Activated CD4-positive, alpha-beta T cell treated with anti-CD3 and anti-CD28 coated beads for 36 hours (primary cell): ENCODE measurements at regions of chr7 and their contacts with region 1.

Region 1: GRCh38 chr7:50467817-50468610 is 17.9 kb upstream of the FIGNL1 start:
- DNase-seq: peak; percentile 92
- ATAC-seq: peak; percentile 95
- H3K4me3 Mint-ChIP-seq: peak overlapping the region; percentile 11
- H3K27ac Mint-ChIP-seq: peak overlapping the region; percentile 59
- H3K4me1 Mint-ChIP-seq: peaks cover 13% of the 10 kb centered on the region
- H3K27me3 Mint-ChIP-seq: peaks cover 5% of the 10 kb centered on the region

Region 2: GRCh38 chr7:50610521-50611277 is 142.7 kb after region 1 on chr7:
- CTCF ChIA-PET with region 1: interaction called, 3 read pairs
- POLR2A ChIA-PET with region 1: no interaction called
- intact Hi-C with region 1: loop called in 1 of 2 experiments (anchors 5 kb)
- DNase-seq: peak; percentile 69
- ATAC-seq: peak; percentile 80
- H3K4me3 Mint-ChIP-seq: no peak overlapping the region
- H3K27ac Mint-ChIP-seq: no peak overlapping the region
- H3K4me1 Mint-ChIP-seq: peaks cover 29% of the 10 kb centered on the region
- H3K27me3 Mint-ChIP-seq: peaks cover 3% of the 10 kb centered on the region

Region 3: DNA sequence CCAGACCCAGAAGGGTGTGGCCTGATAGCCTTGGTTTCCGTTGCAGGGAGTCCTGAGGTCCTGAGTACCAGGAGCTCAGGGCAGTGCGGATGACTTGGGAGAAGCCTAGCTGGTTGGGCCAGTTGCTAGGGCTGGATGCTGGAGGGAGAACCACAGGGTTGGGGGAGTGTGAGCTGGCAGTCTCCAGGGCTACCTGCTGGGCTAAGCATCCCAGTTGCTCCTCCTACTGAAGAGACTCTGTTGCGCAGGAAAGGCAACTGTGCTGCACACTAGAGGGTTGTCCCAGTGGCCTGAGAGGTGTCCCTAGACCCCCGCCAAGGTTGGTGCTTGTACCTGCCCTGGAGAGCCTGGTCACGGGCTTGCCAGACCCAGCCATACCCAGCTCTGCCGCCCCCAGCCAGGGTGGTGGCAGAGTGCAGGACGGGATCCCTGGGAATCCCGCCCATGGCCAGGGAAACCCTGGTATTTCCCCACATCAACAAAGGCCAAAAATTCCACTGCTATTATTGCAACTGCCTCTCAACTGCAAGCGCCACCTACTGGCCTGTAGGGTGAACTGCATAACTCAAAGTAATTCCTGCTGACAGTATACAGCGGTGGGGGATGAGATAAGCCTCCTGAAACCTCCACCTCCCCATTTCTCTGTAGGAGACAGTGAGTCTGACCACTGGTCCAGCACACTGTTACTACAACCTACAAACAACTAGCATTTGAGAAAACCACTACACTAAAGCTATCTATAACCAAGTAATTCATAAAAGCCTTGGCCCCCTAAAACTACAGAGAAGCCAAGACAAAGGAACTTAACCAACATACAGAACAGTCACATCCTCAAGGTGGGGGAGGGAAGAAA is 164.8 kb after region 1 on chr7:
- CTCF ChIA-PET with region 1: interaction called, 39 read pairs
- POLR2A ChIA-PET with region 1: no interaction called
- intact Hi-C with region 1: loop called (anchors 1 kb)
- DNase-seq: peak; percentile 72
- ATAC-seq: peak; percentile 84
- H3K4me3 Mint-ChIP-seq: no peak overlapping the region
- H3K27ac Mint-ChIP-seq: no peak overlapping the region
- H3K4me1 Mint-ChIP-seq: no peaks in the 10 kb centered on the region
- H3K27me3 Mint-ChIP-seq: peaks cover 12% of the 10 kb centered on the region

Region 4: DNA sequence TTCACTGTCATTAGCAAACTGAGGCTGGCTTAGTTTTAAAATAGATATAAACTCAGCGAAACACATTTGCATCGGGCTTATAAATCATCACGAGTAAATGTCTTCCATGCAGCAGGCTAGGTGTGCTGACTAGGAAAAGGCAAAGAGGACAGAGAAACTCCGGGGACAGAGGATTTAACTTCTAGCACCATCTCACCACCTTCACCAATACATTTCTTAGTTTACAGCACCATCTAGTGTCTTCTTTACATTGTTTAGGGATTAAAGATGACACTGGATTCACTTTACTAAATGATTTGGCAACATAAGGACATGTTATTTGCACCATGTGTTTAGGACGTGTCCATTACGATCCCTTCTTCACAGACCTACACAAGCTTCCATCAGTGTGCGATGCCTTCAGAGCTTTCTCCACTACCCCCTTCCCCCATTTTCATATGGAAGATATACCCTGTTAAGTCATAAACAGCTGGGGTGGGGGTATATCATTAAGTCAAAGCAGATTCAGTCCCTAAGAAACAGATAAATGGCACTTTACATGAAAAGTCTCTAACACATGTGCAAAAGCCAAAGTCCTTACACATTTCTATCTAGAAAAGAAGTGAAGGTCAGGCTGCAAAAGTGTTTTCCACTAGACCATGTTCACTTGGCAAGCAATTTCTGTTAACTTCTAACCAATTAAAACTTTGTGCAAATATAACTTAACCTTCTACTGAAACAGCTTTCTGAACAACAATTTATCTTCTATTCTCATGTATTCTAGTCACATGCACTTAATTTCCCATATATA is 211.4 kb after region 1 on chr7:
- CTCF ChIA-PET with region 1: interaction called, 56 read pairs
- POLR2A ChIA-PET with region 1: no interaction called
- intact Hi-C with region 1: loop called (anchors 1 kb)
- DNase-seq: no peak
- ATAC-seq: peak; percentile 78
- H3K4me3 Mint-ChIP-seq: no peak overlapping the region
- H3K27ac Mint-ChIP-seq: no peak overlapping the region
- H3K4me1 Mint-ChIP-seq: no peaks in the 10 kb centered on the region
- H3K27me3 Mint-ChIP-seq: no peaks in the 10 kb centered on the region

Region 5: DNA sequence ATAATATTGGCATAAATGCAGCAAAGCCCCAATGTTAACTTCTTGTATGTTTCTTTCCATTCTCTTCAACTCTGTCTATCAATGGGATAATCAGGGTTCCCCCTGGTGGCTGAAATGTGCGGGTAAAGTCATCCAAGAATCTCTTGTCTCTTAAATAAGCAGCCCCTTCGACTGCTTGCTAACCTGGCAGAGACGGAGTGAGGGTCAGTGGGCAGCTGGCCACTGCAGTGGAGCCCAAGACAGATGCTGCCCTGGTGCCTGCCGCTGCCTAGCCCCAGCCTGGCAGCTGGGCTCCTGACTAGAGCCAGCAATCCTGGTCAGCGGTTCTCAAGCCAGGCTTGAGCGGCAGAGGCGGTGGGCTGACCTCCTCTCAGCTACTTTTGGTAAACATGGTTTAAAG is 599.7 kb after region 1 on chr7:
- CTCF ChIA-PET with region 1: no interaction called
- POLR2A ChIA-PET with region 1: no interaction called
- intact Hi-C with region 1: loop called in 1 of 2 experiments (anchors 1 kb)
- DNase-seq: peak; percentile 72
- ATAC-seq: no peak
- H3K4me3 Mint-ChIP-seq: no peak overlapping the region
- H3K27ac Mint-ChIP-seq: no peak overlapping the region
- H3K4me1 Mint-ChIP-seq: no peaks in the 10 kb centered on the region
- H3K27me3 Mint-ChIP-seq: no peaks in the 10 kb centered on the region

Region 6: DNA sequence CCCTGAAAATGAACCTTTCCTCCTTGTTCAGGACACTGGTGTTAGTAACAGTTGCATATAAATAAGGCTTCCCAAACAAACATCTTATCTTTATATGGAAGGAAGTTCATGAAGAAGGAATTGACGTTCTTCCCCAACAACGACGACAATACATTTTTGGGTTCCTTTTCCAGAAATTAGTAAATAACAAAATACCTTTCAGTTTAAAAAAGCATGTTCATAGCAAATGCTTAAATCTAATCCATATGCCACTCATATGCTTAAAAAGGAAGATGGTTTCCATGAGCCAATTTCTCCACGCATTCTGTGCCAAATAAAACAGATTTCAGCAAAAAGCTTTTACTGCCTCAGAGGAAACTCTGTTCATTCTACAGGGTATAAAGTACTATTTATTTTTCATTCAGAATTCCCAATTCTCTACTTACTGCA is 666.0 kb after region 1 on chr7:
- CTCF ChIA-PET with region 1: interaction called, 10 read pairs
- POLR2A ChIA-PET with region 1: no interaction called
- intact Hi-C with region 1: no loop called
- DNase-seq: no peak
- ATAC-seq: no peak
- H3K4me3 Mint-ChIP-seq: no peak overlapping the region
- H3K27ac Mint-ChIP-seq: no peak overlapping the region
- H3K4me1 Mint-ChIP-seq: no peaks in the 10 kb centered on the region
- H3K27me3 Mint-ChIP-seq: no peaks in the 10 kb centered on the region